ENCODE measurements at regions of chr1 and their contacts with region 1.

Region 1: DNA sequence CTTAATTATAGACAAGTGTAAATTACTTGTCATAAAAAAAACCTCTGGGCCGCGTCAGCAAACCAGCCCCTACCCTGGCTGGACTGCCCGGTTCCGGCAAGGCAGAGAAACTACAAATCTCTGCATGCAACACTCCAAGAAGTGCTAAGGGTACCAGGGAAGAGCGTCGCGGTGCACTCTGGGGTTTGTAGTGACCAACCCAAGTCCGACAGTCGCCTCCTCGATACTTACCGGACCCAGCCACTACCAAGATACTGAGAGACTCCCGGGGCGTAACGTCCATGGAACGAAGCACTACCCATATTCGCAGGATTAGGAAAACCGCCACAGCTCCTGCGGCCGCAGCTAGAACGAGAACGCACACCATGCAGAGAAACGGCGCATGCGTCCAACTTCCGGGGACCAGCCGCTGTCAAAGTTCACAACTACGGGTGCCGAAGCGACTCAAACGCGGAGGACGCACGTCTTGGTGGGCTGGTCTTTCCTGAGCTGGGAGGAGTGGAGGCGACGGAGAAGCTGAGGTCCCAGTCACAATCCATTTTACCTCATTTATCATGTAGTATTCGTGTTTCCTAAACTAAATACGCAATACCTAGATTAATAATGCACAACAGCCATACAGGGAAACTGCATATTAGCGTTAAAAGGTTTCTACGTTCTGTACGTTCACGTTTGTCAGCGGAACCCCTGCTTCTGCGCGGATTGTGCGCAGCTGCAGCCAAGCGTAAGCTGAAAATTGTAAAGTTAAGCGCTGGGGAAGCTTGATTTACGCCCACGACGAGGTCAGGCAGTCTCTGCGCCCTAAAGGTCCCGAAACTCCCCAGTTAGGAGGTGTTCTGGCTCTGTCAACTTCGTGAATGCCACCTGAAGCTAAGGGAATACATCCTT is at the start of gene ALG14:
- DNase-seq: peak; percentile 98
- H3K4me3 ChIP-seq: peak within 1 kb of the TSS; percentile 64
- H3K27ac ChIP-seq: peak within 1 kb of the TSS; percentile 91
- H3K4me1 ChIP-seq: no peaks in the 10 kb centered on the region
- H3K27me3 ChIP-seq: peaks cover 11% of the 10 kb centered on the region
- CTCF ChIP-seq: no peak
- total RNA-seq, gene ALG14: 6.4 and 11.3 TPM in 2 replicates

Region 2: DNA sequence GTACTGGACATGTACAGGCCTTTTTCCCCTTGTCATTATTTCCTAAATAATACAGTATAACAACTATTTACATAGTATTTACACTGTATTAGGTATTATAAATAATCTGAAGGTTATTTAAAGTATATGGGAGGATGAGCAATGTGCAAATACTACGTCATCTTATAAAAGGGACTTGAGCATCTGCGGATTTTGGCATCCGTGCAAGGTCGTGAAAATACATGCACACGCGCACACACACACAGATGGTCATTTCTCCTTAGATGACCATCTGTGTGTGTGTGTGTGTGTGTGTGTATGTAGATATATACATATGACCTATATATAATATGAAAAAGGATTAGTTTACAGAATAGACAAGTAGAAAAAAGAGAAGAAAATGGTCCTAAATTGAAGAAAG is 15.4 kb before region 1 on chr1:
- CTCF ChIA-PET with region 1: no interaction called
- POLR2A ChIA-PET with region 1: no interaction called
- intact Hi-C with region 1: no loop called
- DNase-seq: no peak
- H3K4me3 ChIP-seq: no peak overlapping the region
- H3K27ac ChIP-seq: no peak overlapping the region
- H3K4me1 ChIP-seq: no peaks in the 10 kb centered on the region
- H3K27me3 ChIP-seq: no peaks in the 10 kb centered on the region
- CTCF ChIP-seq: no peak

Region 3: GRCh38 chr1:96362623-96363022 is 1289.8 kb after region 1 on chr1:
- CTCF ChIA-PET with region 1: no interaction called
- POLR2A ChIA-PET with region 1: interaction called, 10 read pairs
- intact Hi-C with region 1: no loop called
- DNase-seq: no peak
- H3K4me3 ChIP-seq: no peak overlapping the region
- H3K27ac ChIP-seq: no peak overlapping the region
- H3K4me1 ChIP-seq: peaks cover 14% of the 10 kb centered on the region
- H3K27me3 ChIP-seq: no peaks in the 10 kb centered on the region
- CTCF ChIP-seq: no peak

Measured in A673 (cell line).